Endothelial cell of umbilical vein (primary cell): ENCODE measurements at regions of chr12 and their contacts with region 1.

Region 1: GRCh38 chr12:50763639-50764285 is at the start of gene ATF1:
- DNase-seq: peak; percentile 93
- H3K4me3 ChIP-seq: peak within 1 kb of the TSS; percentile 56 to 88 (median 61)
- H3K27ac ChIP-seq: peak within 1 kb of the TSS; percentile 59
- H3K4me1 ChIP-seq: peaks cover 11% of the 10 kb centered on the region
- H3K27me3 ChIP-seq: no peaks in the 10 kb centered on the region
- CTCF ChIP-seq: no peak
- POLR2A ChIP-seq: peak; percentile 91
- total RNA-seq, gene ATF1: 26.7 and 26.9 TPM in 2 replicates

Region 2: DNA sequence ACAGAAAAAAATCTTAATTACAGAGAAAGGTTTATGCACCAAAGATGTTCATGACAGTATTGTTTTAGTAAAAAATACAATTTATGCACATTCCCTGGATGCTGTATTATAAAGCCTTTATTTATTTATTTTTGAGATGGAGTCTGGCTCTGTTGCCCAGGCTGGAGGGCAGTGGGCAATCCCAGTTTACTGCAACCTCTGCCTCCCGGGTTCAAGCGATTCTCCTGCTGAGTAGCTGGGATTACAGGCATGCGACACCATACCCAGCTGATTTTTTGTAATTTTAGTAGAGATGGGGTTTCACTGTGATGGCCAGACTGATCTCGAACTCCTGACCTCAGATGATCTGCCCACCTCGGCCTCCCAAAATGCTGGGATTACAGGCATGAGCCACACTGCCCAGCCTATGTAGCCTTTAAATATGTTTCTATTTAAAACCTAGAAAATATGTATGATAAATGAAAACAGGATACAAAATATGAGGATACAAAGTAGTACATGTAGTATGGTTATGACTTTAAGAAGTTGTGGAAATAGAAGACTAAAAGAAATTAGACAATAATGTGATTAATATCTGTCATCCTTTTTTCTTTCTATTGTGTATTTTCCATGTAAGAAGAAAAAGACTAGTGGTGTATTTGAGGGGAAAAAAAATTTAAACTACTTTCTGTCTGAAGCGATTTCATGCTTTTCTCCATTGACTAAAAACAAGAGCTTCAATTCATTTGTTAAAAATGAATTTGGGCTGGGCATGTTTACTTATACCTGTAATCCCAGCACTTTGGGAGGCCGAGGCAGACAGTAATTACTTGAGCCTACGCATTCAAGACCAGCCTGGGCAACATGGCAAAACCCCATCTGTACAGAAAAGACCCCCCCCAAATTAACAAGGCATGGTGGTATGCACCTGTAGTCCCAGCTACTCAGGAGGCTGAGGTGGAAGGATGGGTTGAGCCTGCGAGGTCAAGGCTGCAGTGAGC is 13.3 kb after region 1 on chr12:
- CTCF ChIA-PET with region 1: interaction called, 32 read pairs
- POLR2A ChIA-PET with region 1: interaction called, 4 read pairs
- dilution Hi-C with region 1: no loop called
- intact Hi-C with region 1: no loop called
- DNase-seq: no peak
- H3K4me3 ChIP-seq: no peak overlapping the region
- H3K27ac ChIP-seq: no peak overlapping the region
- H3K4me1 ChIP-seq: no peaks in the 10 kb centered on the region
- H3K27me3 ChIP-seq: no peaks in the 10 kb centered on the region
- CTCF ChIP-seq: no peak
- POLR2A ChIP-seq: no peak

Region 3: GRCh38 chr12:50820177-50820576 is 56.4 kb after region 1 on chr12:
- CTCF ChIA-PET with region 1: interaction called, 56 read pairs
- POLR2A ChIA-PET with region 1: no interaction called
- dilution Hi-C with region 1: no loop called
- intact Hi-C with region 1: loop called (anchors 1 kb)
- DNase-seq: no peak
- H3K4me3 ChIP-seq: no peak overlapping the region
- H3K27ac ChIP-seq: no peak overlapping the region
- H3K4me1 ChIP-seq: no peaks in the 10 kb centered on the region
- H3K27me3 ChIP-seq: no peaks in the 10 kb centered on the region
- CTCF ChIP-seq: no peak
- POLR2A ChIP-seq: no peak

Region 4: DNA sequence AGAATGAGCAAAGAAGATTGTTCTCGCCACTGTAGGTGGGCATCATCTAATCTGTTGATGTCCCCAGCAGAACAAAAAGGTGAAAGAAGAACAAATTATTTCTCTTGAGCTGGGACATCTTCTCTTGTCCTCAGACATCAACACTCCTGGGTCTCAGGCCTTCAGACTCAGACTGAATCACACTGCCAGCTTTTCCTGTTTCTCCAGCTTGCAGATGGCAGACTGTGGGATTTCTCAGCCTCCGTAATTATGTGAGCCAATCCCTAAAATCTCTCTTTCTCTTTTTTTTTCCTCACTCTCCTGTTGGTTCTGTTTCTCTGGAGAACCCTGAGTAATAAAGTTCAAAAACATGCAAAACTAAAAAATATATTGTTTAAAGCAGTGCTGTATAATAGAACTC is 75.3 kb after region 1 on chr12:
- CTCF ChIA-PET with region 1: no interaction called
- POLR2A ChIA-PET with region 1: no interaction called
- dilution Hi-C with region 1: no loop called
- intact Hi-C with region 1: no loop called
- DNase-seq: no peak
- H3K4me3 ChIP-seq: no peak overlapping the region
- H3K27ac ChIP-seq: no peak overlapping the region
- H3K4me1 ChIP-seq: no peaks in the 10 kb centered on the region
- H3K27me3 ChIP-seq: peaks cover 0 to 1% of the 10 kb centered on the region in 2 experiments
- CTCF ChIP-seq: no peak
- POLR2A ChIP-seq: no peak

Region 5: DNA sequence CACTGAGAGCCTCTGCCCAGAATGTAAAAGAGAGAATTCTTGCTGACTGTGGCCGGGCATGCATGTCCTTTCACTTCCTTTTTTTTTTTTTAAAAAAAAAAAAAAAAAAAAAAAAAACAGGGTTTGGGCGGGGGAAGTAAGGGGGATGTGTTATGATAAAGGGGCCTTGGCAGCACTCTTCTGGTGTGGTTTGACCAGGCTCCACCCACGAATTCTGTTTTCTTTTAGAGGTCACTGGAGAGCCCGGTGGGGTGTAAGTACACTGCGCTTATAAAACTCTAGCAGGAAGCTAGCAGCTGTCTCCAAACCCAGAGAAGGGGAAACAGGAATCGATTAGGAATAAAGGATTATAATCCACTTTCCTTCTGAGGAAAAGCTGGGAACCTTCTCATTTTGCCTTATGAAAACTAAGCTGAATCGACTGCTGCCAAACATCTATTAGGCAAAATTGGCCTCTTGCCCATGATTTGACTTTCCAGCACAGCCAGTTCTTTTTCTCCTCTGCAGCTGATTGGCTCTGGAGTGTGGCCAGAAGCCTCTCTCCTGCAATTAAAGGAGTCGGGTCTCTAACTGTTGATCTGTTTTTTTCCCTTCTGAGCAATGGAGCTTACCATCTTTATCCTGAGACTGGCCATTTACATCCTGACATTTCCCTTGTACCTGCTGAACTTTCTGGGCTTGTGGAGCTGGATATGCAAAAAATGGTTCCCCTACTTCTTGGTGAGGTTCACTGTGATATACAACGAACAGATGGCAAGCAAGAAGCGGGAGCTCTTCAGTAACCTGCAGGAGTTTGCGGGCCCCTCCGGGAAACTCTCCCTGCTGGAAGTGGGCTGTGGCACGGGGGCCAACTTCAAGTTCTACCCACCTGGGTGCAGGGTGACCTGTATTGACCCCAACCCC is 160.9 kb after region 1 on chr12:
- CTCF ChIA-PET with region 1: interaction called, 10 read pairs
- POLR2A ChIA-PET with region 1: interaction called, 5 read pairs
- dilution Hi-C with region 1: no loop called
- intact Hi-C with region 1: no loop called
- DNase-seq: peak; percentile 94
- H3K4me3 ChIP-seq: peak overlapping the region; percentile 48 to 66 (median 55)
- H3K27ac ChIP-seq: peak overlapping the region; percentile 65
- H3K4me1 ChIP-seq: peaks cover 24% of the 10 kb centered on the region
- H3K27me3 ChIP-seq: no peaks in the 10 kb centered on the region
- CTCF ChIP-seq: no peak
- POLR2A ChIP-seq: no peak

Region 6: GRCh38 chr12:51025836-51026638 is 262.3 kb after region 1 on chr12 and contains the start of gene SLC11A2:
- CTCF ChIA-PET with region 1: interaction called, 28 read pairs
- POLR2A ChIA-PET with region 1: no interaction called
- dilution Hi-C with region 1: no loop called
- intact Hi-C with region 1: loop called (anchors 1 kb)
- DNase-seq: peak; percentile 95
- H3K4me3 ChIP-seq: peak within 1 kb of the TSS; percentile 64 to 79 (median 78)
- H3K27ac ChIP-seq: peak within 1 kb of the TSS; percentile 90
- H3K4me1 ChIP-seq: peaks cover 17% of the 10 kb centered on the region
- H3K27me3 ChIP-seq: peaks cover 5 to 7% of the 10 kb centered on the region in 2 experiments
- CTCF ChIP-seq: peak in 1 of 2 donors; percentile 31
- POLR2A ChIP-seq: peak; percentile 73
- total RNA-seq, gene SLC11A2: 41.1 and 56.4 TPM in 2 replicates

Region 7: DNA sequence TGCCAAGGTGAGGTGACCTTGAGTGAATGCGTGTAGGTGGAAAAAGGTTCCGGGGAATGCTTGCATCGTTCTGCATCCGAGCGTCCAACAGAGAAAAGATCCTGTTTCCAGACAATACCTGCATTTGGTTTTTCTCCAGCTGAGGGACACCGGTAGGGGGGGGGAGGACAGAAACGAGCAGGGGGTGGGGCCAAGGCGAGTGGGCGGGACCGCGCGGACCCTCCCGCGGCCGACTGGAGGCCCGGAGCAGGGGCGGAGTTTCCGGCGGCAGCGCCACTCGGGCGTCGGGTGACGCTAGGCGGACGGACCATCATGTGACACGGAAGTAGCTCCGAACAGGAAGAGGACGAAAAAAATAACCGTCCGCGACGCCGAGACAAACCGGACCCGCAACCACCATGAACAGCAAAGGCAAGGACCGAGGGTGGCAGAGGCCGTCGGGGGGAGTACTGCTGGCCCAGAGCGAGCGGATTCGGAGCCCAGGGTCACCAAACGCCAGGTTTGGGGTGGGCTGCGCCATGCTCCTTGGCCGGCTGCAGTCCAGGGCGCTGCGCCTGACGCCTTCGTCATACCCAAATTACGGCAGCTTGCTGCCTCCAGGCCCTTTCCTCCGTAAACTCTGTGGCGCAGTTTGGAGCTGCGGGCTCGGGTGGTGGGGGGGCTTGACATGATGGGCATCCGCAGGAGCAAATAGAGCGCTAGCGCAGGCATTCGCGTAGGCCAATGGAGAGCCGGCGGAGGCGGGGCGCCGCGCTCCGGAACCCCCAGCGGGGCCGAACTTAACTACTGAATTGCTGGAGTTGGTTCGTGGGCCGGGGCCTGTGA is 475.0 kb after region 1 on chr12 and contains the start of gene DAZAP2:
- CTCF ChIA-PET with region 1: no interaction called
- POLR2A ChIA-PET with region 1: no interaction called
- dilution Hi-C with region 1: no loop called
- intact Hi-C with region 1: no loop called
- DNase-seq: peak; percentile 96
- H3K4me3 ChIP-seq: peak within 1 kb of the TSS; percentile 11 to 97 (median 66)
- H3K27ac ChIP-seq: peak within 1 kb of the TSS; percentile 85
- H3K4me1 ChIP-seq: peaks cover 12% of the 10 kb centered on the region
- H3K27me3 ChIP-seq: no peaks in the 10 kb centered on the region
- CTCF ChIP-seq: peak in 1 of 2 donors; percentile 31
- POLR2A ChIP-seq: peak; percentile 93
- total RNA-seq, gene DAZAP2: 177 TPM in 2 replicates

Region 8: GRCh38 chr12:51351913-51352532 is 588.3 kb after region 1 on chr12:
- CTCF ChIA-PET with region 1: interaction called, 8 read pairs
- POLR2A ChIA-PET with region 1: no interaction called
- dilution Hi-C with region 1: no loop called
- intact Hi-C with region 1: loop called (anchors 1 kb)
- DNase-seq: peak; percentile 66
- H3K4me3 ChIP-seq: no peak overlapping the region
- H3K27ac ChIP-seq: no peak overlapping the region
- H3K4me1 ChIP-seq: no peaks in the 10 kb centered on the region
- H3K27me3 ChIP-seq: no peaks in the 10 kb centered on the region
- CTCF ChIP-seq: peak; percentile 66 to 80
- POLR2A ChIP-seq: peak; percentile 24